ENCODE measurements at regions of chr2 and their contacts with region 1.

Region 1: DNA sequence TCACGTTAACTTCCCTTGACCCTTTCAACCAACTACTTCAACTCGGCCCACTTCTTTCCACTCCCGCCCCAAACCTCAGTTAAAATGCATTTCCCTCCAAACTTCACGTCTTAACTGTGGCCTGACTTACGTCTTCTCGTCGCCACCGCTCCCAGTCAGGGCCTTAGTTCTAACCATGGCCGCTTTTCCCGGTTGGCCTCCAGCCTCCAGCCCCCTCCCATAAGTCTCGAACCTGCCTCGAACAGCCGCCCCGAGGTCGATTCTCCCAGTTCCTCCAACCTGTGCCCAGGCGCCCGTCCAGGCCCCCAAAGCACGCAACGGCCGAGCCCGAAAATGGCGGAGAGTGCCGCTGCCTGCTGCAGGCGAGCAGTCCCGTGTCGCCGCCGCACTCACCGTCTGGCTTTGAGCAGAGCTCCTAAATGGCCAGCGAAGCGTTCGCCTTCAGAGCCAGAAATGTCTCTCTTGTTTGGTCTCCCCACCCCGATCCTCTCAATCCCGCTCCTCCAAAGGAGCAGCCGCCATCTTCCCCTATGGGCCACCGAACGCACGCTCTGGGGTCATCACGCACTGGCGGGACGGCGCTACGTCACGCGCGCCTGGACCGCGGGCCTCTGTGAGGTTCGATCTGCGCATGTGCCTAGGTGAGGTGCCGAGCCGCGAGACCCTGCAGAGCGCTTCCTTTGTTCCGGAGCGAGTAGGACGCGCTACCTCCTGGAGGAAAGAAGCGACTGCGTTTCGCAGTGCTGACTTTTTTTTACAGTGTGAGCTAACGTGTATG is at the start of gene WDR33:
- DNase-seq: peak; percentile 89 to 95 (median 93)
- H3K4me3 ChIP-seq: peak within 1 kb of the TSS; percentile 67 to 91 (median 85)
- H3K27ac ChIP-seq: peak within 1 kb of the TSS; percentile 84 to 99 (median 97)
- H3K4me1 ChIP-seq: peaks cover 8 to 39% of the 10 kb centered on the region in 2 donors
- H3K27me3 ChIP-seq: no peaks in the 10 kb centered on the region
- CTCF ChIP-seq: peak in 5 of 6 experiments; percentile 0 to 26 (median 15)
- POLR2A ChIP-seq: peak; percentile 61 to 90
- total RNA-seq, gene WDR33: 13.8 to 59.8 (median 44.2) TPM

Region 2: DNA sequence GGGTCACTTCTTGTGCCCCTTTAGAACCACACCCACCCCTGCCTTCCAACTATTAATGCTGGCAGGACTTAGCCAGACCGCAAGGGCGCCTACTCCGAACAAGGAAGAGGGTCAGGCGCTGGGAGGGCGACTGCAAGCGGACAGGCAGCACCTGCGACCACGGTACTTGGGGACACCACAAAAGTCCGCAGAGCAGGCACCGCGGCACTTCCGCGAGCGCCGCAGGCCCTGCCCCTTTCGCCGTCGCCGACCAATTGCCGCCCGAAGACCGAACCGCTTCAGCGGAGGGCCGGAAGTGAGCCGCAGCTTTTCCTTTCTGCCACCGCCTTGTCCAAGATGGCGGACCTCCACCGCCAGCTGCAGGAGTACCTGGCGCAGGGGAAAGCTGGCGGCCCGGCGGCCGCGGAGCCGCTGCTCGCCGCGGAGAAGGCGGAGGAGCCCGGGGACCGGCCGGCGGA is 109.6 kb before region 1 on chr2 and contains the start of gene SFT2D3:
- intact Hi-C with region 1: loop called in 1 of 2 experiments (anchors 10 kb)
- DNase-seq: peak; percentile 91 to 96 (median 94)
- H3K4me3 ChIP-seq: peak within 1 kb of the TSS; percentile 31 to 94 (median 48)
- H3K27ac ChIP-seq: peak within 1 kb of the TSS; percentile 81 to 100 (median 94)
- H3K4me1 ChIP-seq: peaks cover 6 to 23% of the 10 kb centered on the region in 2 donors
- H3K27me3 ChIP-seq: no peaks in the 10 kb centered on the region
- CTCF ChIP-seq: no peak
- POLR2A ChIP-seq: peak; percentile 94 to 95
- total RNA-seq, gene SFT2D3: 5.1 to 12.2 (median 6.8) TPM

Region 3: GRCh38 chr2:127901339-127902056 is 90.7 kb after region 1 on chr2:
- intact Hi-C with region 1: no loop called
- DNase-seq: peak; percentile 86 to 96 (median 94)
- H3K4me3 ChIP-seq: no peak overlapping the region
- H3K27ac ChIP-seq: peak overlapping the region; percentile 7 to 86 (median 58)
- H3K4me1 ChIP-seq: peaks cover 0 to 10% of the 10 kb centered on the region in 2 donors
- H3K27me3 ChIP-seq: no peaks in the 10 kb centered on the region
- CTCF ChIP-seq: no peak
- POLR2A ChIP-seq: peak in 1 of 2 donors; percentile 15